H1 (cell line): ENCODE measurements at regions of chr11 and their contacts with region 1.

Region 1: DNA sequence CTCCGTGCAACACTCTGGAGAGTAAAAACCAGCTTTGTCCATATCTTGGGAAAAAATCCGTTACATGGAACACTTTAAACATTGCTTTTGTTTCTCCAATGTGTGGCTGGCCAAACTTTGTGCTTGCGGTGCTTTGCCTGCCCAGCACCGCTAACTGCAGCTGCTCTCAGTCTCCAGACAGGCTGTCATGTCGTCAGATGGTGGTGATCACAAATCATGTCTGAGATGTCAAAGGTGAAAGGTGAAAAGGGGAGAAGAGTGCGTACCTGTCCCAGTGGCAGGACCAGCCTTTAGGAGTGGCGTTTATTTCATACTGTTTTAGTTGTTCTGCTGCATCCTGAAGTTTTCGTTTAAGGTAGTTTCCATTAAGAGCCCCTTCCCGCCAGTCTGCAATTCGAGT is 17.1 kb upstream of the AGBL2 start:
- DNase-seq: no peak
- H3K4me3 ChIP-seq: no peak overlapping the region
- H3K27ac ChIP-seq: no peak overlapping the region
- H3K4me1 ChIP-seq: no peaks in the 10 kb centered on the region
- H3K27me3 ChIP-seq: no peaks in the 10 kb centered on the region
- CTCF ChIP-seq: no peak
- EP300 ChIP-seq: no peak
- POLR2A ChIP-seq: no peak
- RAD21 ChIP-seq: no peak

Region 2: GRCh38 chr11:47750725-47751124 is 18.5 kb after region 1 on chr11:
- CTCF ChIA-PET with region 1: interaction called, 5 read pairs
- POLR2A ChIA-PET with region 1: interaction called, 11 read pairs
- DNase-seq: no peak
- H3K4me3 ChIP-seq: no peak overlapping the region
- H3K27ac ChIP-seq: no peak overlapping the region
- H3K4me1 ChIP-seq: no peaks in the 10 kb centered on the region
- H3K27me3 ChIP-seq: no peaks in the 10 kb centered on the region
- CTCF ChIP-seq: no peak
- EP300 ChIP-seq: no peak
- POLR2A ChIP-seq: no peak
- RAD21 ChIP-seq: no peak